ENCODE measurements at regions of chr12 and their contacts with region 1.

Region 1: GRCh38 chr12:94941440-94941862 is 62.0 kb downstream of the NDUFA12 start:
- DNase-seq: peak; percentile 77
- H3K4me3 Mint-ChIP-seq: no peak overlapping the region
- H3K27ac Mint-ChIP-seq: peak overlapping the region; percentile 86
- H3K4me1 Mint-ChIP-seq: peaks cover 10% of the 10 kb centered on the region
- H3K27me3 Mint-ChIP-seq: no peaks in the 10 kb centered on the region
- CTCF ChIP-seq: no peak

Region 2: GRCh38 chr12:94571556-94571955 is 369.9 kb before region 1 on chr12:
- CTCF ChIA-PET with region 1: no interaction called
- POLR2A ChIA-PET with region 1: no interaction called
- intact Hi-C with region 1: no loop called
- DNase-seq: peak; percentile 85
- H3K4me3 Mint-ChIP-seq: no peak overlapping the region
- H3K27ac Mint-ChIP-seq: no peak overlapping the region
- H3K4me1 Mint-ChIP-seq: peaks cover 6% of the 10 kb centered on the region
- H3K27me3 Mint-ChIP-seq: no peaks in the 10 kb centered on the region
- CTCF ChIP-seq: no peak

Region 3: GRCh38 chr12:94954029-94954685 is 12.7 kb after region 1 on chr12:
- CTCF ChIA-PET with region 1: no interaction called
- POLR2A ChIA-PET with region 1: interaction called, 14 read pairs
- intact Hi-C with region 1: no loop called
- DNase-seq: peak; percentile 74
- H3K4me3 Mint-ChIP-seq: peak overlapping the region; percentile 17
- H3K27ac Mint-ChIP-seq: peak overlapping the region; percentile 88
- H3K4me1 Mint-ChIP-seq: peaks cover 42% of the 10 kb centered on the region
- H3K27me3 Mint-ChIP-seq: no peaks in the 10 kb centered on the region
- CTCF ChIP-seq: no peak

Region 4: GRCh38 chr12:95224202-95225170 is 283.0 kb after region 1 on chr12:
- CTCF ChIA-PET with region 1: no interaction called
- POLR2A ChIA-PET with region 1: no interaction called
- intact Hi-C with region 1: no loop called
- DNase-seq: peak; percentile 37
- H3K4me3 Mint-ChIP-seq: no peak overlapping the region
- H3K27ac Mint-ChIP-seq: peak overlapping the region; percentile 73
- H3K4me1 Mint-ChIP-seq: peaks cover 27% of the 10 kb centered on the region
- H3K27me3 Mint-ChIP-seq: no peaks in the 10 kb centered on the region
- CTCF ChIP-seq: no peak

Measured in MCF 10A (cell line).